Caco-2 (cell line): ENCODE measurements at regions of chr2 and their contacts with region 1.

Region 1: DNA sequence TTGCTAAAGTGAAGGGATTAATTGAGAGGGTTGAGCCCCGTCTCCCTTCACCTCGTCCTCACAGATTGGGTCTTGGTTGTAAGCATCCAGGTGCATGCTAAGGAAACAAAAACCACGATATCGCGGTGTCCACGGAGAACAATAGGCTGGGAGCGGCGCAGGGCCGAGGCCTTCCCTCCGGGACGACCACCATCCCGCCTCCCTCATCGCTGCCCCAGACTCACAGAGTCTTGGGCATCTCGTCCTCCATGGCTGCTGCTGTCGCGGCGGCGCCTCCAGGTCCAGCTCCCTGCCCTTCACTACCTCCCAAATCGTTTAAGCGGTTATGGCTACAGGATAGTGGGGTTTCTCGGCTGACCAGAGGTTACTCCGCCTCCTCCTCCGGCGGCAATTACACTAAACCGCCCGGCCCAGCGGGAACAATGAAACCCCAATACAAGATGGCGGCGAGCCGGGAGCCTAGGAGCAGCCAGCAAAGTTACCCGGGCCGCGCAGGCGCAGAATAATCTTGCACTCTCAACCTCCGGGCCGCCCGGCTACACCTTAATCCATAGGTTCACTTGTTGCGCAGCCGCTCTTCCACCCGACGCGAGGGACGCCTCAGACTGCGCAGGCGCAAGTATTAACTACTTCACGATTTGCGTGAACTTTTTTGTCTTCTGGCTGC is at the start of gene TIA1:
- DNase-seq: peak; percentile 98 to 99
- H3K4me3 ChIP-seq: peak within 1 kb of the TSS; percentile 61
- H3K4me3 Mint-ChIP-seq: peak within 1 kb of the TSS; percentile 89
- H3K27ac Mint-ChIP-seq: peak within 1 kb of the TSS; percentile 95
- H3K4me1 ChIP-seq: peaks cover 6% of the 10 kb centered on the region; the same call in 1 of the 2 replicates
- H3K4me1 Mint-ChIP-seq: peaks cover 18% of the 10 kb centered on the region
- H3K27me3 ChIP-seq: no peaks in the 10 kb centered on the region
- H3K27me3 Mint-ChIP-seq: peaks cover 3% of the 10 kb centered on the region
- CTCF ChIP-seq: no peak
- total RNA-seq, gene TIA1: 146 and 149 TPM in 2 replicates

Region 2: DNA sequence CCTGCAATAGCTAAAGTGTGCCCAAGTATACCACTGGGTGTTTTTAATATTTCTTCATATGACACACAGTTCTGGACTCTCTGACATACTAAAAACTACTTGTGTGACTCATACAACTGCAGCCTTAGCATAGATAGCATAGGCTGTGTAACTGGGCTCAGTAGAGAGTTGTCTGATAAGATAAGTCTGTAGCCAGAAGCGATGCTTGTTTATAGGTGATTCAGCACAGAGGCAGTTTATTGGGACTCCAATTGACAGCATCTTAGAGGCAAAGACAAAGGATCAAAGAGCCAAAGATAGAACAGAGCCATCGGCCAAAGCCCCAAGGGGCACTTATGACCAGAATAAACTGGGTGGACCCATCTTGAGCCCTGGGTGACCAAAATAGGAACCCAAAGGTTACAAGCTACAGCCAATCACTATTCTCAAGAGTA is 647.1 kb before region 1 on chr2:
- CTCF ChIA-PET with region 1: no interaction called
- POLR2A ChIA-PET with region 1: no interaction called
- intact Hi-C with region 1: no loop called
- DNase-seq: peak; percentile 77 to 81
- H3K4me3 ChIP-seq: no peak overlapping the region
- H3K4me3 Mint-ChIP-seq: peak overlapping the region; percentile 42
- H3K27ac Mint-ChIP-seq: peak overlapping the region; percentile 82
- H3K4me1 ChIP-seq: peaks cover 43% of the 10 kb centered on the region
- H3K4me1 Mint-ChIP-seq: peaks cover 41% of the 10 kb centered on the region
- H3K27me3 ChIP-seq: no peaks in the 10 kb centered on the region
- H3K27me3 Mint-ChIP-seq: no peaks in the 10 kb centered on the region
- CTCF ChIP-seq: no peak

Region 3: GRCh38 chr2:70190418-70191243 is 57.7 kb before region 1 on chr2 and contains the start of gene C2orf42:
- CTCF ChIA-PET with region 1: no interaction called
- POLR2A ChIA-PET with region 1: interaction called, 10 read pairs
- intact Hi-C with region 1: loop called (anchors 2 kb)
- DNase-seq: peak; percentile 97 to 98
- H3K4me3 ChIP-seq: peak within 1 kb of the TSS; percentile 95
- H3K4me3 Mint-ChIP-seq: peak within 1 kb of the TSS; percentile 90
- H3K27ac Mint-ChIP-seq: peak within 1 kb of the TSS; percentile 97
- H3K4me1 ChIP-seq: 0 out of 2 replicates have a peak, but pooled peaks cover 6% of the 10 kb centered on the region
- H3K4me1 Mint-ChIP-seq: peaks cover 10% of the 10 kb centered on the region
- H3K27me3 ChIP-seq: no peaks in the 10 kb centered on the region
- H3K27me3 Mint-ChIP-seq: no peaks in the 10 kb centered on the region
- CTCF ChIP-seq: peak in 1 of 2 experiments; percentile 21
- total RNA-seq, gene C2orf42: 12.7 and 14.8 TPM in 2 replicates

Region 4: GRCh38 chr2:70258532-70258874 is 10.2 kb after region 1 on chr2:
- CTCF ChIA-PET with region 1: interaction called, 3 read pairs
- POLR2A ChIA-PET with region 1: interaction called, 15 read pairs
- intact Hi-C with region 1: no loop called
- DNase-seq: peak; percentile 59 to 65
- H3K4me3 ChIP-seq: peak overlapping the region; percentile 87
- H3K4me3 Mint-ChIP-seq: peak overlapping the region; percentile 97
- H3K27ac Mint-ChIP-seq: peak overlapping the region; percentile 92
- H3K4me1 ChIP-seq: no peaks in the 10 kb centered on the region
- H3K4me1 Mint-ChIP-seq: peaks cover 20% of the 10 kb centered on the region
- H3K27me3 ChIP-seq: no peaks in the 10 kb centered on the region
- H3K27me3 Mint-ChIP-seq: no peaks in the 10 kb centered on the region
- CTCF ChIP-seq: no peak

Region 5: DNA sequence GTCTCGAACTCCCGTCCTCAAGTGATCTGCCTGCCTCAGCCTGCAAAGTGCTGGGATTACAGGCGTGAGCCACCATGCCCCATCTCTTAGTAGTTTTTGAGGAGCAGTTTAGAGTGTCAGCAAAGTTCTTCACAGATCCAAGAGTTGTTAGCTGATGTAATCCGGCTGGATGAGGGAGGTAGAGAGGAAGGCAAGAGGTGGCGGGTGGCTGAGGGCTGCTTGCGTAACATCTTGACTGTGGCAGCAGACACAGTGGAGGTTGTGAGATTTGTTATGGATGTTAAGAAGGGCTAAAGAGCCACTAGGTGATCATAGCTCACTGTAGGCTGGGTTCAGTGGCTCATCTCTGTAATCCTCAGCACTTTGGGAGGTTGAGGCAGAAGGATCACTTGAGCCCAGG is 73.1 kb after region 1 on chr2:
- CTCF ChIA-PET with region 1: no interaction called
- POLR2A ChIA-PET with region 1: no interaction called
- intact Hi-C with region 1: no loop called
- DNase-seq: no peak
- H3K4me3 ChIP-seq: no peak overlapping the region
- H3K4me3 Mint-ChIP-seq: no peak overlapping the region
- H3K27ac Mint-ChIP-seq: no peak overlapping the region
- H3K4me1 ChIP-seq: no peaks in the 10 kb centered on the region
- H3K4me1 Mint-ChIP-seq: no peaks in the 10 kb centered on the region
- H3K27me3 ChIP-seq: no peaks in the 10 kb centered on the region
- H3K27me3 Mint-ChIP-seq: peaks cover 15% of the 10 kb centered on the region
- CTCF ChIP-seq: no peak